HepG2 (cell line): ENCODE measurements at regions of chr20 and their contacts with region 1.

Region 1: GRCh38 chr20:62926239-62927104 is at the start of gene DIDO1:
- DNase-seq: peak; percentile 87
- ATAC-seq: peak; percentile 85
- H3K4me3 ChIP-seq: peak within 1 kb of the TSS; percentile 87 to 99 (median 97)
- H3K27ac ChIP-seq: peak within 1 kb of the TSS; percentile 90
- H3K4me1 ChIP-seq: peaks cover 63% of the 10 kb centered on the region
- H3K27me3 ChIP-seq: peaks cover 0 to 5% of the 10 kb centered on the region in 2 experiments; a peak in 1 of 5 replicates
- CTCF ChIP-seq: peak; percentile 84
- EP300 ChIP-seq: no peak
- POLR2A ChIP-seq: peak; percentile 60 to 77; a peak in 3 of 4 replicates
- RAD21 ChIP-seq: peak; percentile 93
- total RNA-seq, gene DIDO1: 75.1 and 77.0 TPM in 2 replicates

Region 2: DNA sequence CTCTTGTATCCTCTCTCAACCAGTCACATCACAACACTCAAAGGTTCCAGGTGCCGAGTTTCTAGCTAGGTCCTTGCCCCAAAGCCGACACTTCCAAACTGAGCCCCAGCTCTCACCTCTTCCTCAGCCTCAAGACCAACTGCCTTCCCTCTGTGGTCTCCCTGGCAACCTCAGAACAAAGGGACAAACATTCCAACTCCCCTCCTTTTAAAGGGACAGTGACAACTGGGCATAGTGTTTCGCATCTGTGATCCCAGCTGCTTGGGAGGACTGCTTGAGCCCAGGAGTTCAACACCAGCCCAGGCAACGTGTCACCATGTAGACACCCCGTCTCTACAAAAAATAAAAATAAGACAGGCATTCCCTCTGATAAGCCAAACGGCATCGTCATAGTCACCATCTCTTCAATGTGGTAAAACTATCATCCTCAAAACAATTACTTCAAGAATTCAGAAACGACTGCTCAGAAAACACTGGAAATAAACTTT is 11.5 kb before region 1 on chr20:
- CTCF ChIA-PET with region 1: no interaction called
- POLR2A ChIA-PET with region 1: interaction called, 18 read pairs
- in situ Hi-C with region 1: no loop called
- intact Hi-C with region 1: no loop called
- DNase-seq: peak; percentile 77
- ATAC-seq: peak; percentile 46
- H3K4me3 ChIP-seq: peak overlapping the region in 1 of 3 experiments; percentile 4; a peak in 1 of 6 replicates
- H3K27ac ChIP-seq: peak overlapping the region; percentile 93
- H3K4me1 ChIP-seq: peaks cover 75% of the 10 kb centered on the region
- H3K27me3 ChIP-seq: no peaks in the 10 kb centered on the region
- CTCF ChIP-seq: no peak
- EP300 ChIP-seq: no peak
- POLR2A ChIP-seq: peak; percentile 16 to 81; a peak in 2 of 4 replicates
- RAD21 ChIP-seq: no peak; the same call in 1 of the 2 replicates

Region 3: DNA sequence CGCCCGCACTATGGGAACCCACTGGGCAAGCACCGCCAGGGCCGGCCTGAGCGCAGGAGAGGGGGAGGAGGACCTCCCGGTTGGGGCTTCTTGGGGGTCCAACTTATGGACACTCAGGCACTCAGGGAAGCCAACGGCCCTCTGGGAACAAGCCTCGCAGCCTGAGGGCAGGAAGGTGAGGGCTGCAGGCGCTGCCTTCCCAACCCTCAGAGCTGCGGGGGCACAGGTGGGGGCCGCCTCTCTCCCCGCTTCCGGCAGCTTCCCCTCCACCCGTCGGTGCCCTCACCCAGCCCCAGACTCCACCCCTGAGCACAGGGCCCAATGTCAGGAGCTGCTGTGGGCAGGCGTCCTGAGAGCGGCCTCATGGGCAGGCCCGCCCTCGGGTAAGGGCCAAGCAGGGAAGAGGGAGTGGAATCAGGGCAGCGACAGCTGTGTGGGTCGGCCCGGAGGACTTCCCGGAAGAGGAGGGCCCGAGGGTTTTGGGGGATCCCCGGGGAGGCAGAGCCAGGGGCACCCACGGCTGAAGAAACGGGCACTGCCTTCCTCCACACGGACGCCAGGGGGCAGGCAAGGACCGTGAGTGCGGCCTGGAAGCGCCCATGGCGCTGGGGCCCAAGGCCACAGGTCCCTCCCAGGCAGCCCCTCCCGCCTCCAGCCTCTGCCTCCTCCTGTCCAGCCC is 611.2 kb after region 1 on chr20:
- CTCF ChIA-PET with region 1: no interaction called
- POLR2A ChIA-PET with region 1: no interaction called
- in situ Hi-C with region 1: no loop called
- intact Hi-C with region 1: no loop called
- DNase-seq: peak; percentile 86
- ATAC-seq: peak; percentile 79
- H3K4me3 ChIP-seq: peak overlapping the region; percentile 37 to 76 (median 64); a peak in 5 of 6 replicates
- H3K27ac ChIP-seq: no peak overlapping the region
- H3K4me1 ChIP-seq: peaks cover 48% of the 10 kb centered on the region
- H3K27me3 ChIP-seq: peaks cover 48 to 65% of the 10 kb centered on the region in 2 experiments
- CTCF ChIP-seq: peak; percentile 99
- EP300 ChIP-seq: peak; percentile 12 to 30; a peak in 2 of 4 replicates
- POLR2A ChIP-seq: 0 out of 4 replicates have a peak, but pooled peaks of 1 of the 2 experiments have one; percentile 30
- RAD21 ChIP-seq: peak; percentile 100